AG04449 (cell line): ENCODE measurements at regions of chr17 and their contacts with region 1.

Region 1: DNA sequence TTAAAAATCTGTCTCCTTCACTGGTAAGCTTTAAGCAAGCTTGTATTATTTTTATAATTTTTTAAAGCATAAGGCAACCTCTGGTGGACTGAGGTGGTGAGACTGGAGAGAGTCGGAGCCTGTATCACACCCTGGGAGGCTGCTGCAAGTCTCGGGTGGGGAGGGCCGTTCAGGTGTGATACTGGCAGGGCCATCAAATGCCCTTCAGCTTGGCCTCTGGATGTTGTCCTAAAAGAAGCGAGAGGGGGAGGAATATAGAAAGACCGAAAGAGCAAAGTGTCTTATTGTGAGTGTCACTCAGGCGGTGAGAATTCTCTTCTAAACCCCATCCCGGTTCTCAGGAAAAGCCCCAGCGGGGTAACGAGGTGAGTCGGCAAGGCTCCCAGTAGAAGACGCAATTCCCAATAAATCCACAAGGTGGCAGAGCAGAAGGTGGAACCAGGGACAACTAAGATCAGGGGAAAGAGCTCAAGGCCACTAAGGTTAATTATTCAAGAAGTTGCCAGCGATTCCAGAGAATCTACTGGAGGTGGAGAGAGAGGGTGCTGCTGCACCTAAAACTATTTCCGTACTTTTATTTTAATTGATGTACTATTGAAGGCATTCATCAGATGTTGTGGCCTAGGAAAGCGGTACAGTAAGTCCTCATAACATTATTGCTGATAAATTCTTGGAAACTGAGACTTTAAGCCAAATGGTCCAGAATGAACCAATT is 14.1 kb downstream of the C17orf67 start:
- DNase-seq: no peak
- H3K4me3 ChIP-seq: no peak overlapping the region
- CTCF ChIP-seq: peak; percentile 74

Region 2: GRCh38 chr17:56779898-56780733 is 39.5 kb before region 1 on chr17:
- CTCF ChIA-PET with region 1: interaction called, 18 read pairs
- POLR2A ChIA-PET with region 1: no interaction called
- DNase-seq: no peak
- H3K4me3 ChIP-seq: peak overlapping the region; percentile 53
- CTCF ChIP-seq: peak; percentile 96

Region 3: GRCh38 chr17:56798908-56799307 is 20.7 kb before region 1 on chr17:
- CTCF ChIA-PET with region 1: interaction called, 24 read pairs
- POLR2A ChIA-PET with region 1: no interaction called
- DNase-seq: no peak
- H3K4me3 ChIP-seq: no peak overlapping the region
- CTCF ChIP-seq: no peak

Region 4: DNA sequence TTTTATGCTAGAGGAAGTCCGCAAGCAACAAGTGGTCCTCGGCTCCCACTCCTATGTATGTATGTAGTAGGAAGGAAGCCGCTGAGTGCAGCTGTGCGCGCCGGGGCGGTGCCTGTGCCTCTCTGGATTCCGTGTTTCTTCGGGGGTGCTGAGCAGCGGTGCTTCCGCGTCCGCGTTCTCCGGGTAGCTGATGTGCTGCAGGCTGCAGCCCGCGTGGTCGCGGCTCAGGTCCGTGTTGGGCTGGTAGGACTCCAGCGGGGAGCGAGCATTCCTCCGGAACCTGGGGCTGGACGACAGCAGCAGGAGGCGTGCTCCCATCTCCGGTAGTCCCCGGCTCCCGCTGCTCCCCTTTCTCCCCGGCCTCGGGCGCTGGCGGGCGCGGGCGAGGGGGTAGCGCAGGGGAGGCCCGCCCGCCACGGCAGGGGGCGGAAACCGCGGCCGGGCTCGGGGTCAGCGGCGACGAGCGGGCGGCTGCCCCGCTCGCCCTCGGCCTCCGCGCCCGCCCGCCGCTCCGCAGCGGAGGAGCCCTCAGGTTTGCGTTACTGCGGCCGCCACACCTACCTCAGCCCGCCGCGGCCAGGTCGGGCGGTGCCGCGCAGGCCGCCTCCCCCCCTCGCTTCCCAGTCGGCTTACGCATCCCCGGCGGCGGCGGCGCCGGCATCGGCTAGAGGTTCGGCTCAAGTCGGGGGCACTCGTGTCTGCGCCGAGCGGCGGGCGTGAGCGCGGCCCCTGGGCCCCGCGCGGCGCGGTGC is 13.6 kb after region 1 on chr17:
- CTCF ChIA-PET with region 1: interaction called, 47 read pairs
- POLR2A ChIA-PET with region 1: interaction called, 3 read pairs
- DNase-seq: no peak
- H3K4me3 ChIP-seq: peak overlapping the region; percentile 83
- CTCF ChIP-seq: no peak

Region 5: DNA sequence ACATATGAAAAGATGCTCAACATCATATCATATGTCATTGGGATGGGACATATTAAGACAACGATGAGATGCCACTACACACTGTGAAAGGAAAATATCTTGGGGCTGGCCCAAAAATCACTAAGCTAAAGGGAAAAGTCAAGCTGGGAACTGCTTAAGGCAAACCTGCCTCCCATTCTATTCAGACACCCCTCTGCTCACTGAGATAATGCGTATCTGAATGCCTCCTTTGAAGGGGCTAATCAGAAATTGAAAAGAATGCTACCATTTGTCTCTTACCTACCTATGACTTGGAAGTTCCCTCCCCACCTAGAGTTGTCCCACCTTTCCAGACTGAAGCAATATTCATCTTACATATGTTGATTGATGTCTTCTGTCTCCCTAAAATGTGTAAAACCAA is 105.5 kb after region 1 on chr17:
- CTCF ChIA-PET with region 1: interaction called, 48 read pairs
- POLR2A ChIA-PET with region 1: no interaction called
- DNase-seq: no peak
- H3K4me3 ChIP-seq: no peak overlapping the region
- CTCF ChIP-seq: no peak

Region 6: DNA sequence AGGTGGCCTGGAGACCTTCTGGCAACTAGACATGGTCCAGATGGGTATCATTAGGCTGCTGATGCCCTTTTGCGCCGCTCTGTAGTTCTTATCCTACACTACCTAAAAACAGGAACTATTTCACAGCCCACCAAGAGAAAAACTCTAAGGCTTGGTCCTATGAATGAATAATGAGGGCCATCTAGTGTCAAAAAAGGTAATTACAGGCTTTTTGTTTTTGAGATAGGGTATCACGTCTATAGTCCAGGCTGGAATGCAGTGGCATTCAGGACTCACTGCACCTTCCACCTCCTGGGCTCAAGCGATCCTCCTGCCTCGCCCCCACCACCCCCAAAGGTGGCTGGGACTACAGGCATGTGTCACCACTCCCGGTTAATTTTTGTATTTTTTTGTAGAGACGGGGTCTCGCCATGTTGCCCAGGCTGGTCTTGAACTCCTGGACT is 120.3 kb after region 1 on chr17:
- CTCF ChIA-PET with region 1: interaction called, 258 read pairs
- POLR2A ChIA-PET with region 1: no interaction called
- DNase-seq: no peak
- H3K4me3 ChIP-seq: no peak overlapping the region
- CTCF ChIP-seq: peak; percentile 25

Region 7: DNA sequence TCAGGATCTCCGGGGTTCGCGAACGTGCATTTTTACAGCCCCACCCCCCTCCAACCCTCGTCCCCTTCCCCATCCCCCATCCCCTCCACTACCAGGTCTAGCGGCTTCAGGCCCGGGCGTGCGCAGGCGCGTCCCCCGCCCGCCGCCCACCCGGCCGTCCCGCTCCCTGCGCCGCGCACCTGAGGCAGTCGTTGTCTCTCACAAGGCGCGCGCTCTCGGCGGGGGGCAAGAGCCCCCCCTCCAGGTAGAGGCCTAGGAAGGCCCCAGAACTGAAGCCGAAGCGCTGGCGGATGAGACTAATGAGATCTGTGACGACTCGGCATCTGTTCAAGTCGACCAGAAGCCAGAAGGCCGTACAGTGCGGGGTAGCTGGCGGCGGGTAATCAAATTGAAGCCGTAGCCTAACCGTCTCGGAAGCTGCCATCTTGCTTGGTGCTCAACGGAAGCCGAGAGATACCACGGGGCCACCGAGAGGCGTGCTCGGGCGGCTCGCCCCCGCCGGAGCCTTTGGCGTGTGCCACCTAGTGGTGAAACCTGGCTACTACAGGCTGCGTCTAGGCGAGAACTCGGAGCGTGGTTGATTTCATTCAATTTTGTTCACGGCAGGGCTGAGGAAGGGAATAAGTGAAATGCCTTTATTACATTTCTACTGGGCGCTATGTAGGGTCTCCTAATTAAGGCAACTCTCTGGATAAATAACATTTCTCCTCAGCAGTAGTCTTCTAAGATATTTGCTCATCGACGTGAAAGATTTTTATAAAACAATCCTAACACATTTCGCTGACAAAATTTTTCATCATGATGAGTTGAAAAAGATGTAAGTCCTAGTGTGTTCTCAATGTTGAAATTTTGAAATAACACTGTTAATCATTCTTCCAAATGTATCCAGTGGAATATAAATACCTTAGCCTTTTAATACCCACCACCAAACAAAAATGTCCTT is 141.3 kb after region 1 on chr17 and contains the start of gene COIL:
- CTCF ChIA-PET with region 1: interaction called, 15 read pairs
- POLR2A ChIA-PET with region 1: interaction called, 3 read pairs
- DNase-seq: peak; percentile 49
- H3K4me3 ChIP-seq: peak within 1 kb of the TSS; percentile 84
- CTCF ChIP-seq: peak; percentile 98